PC-9 (cell line): ENCODE measurements at regions of chr19 and their contacts with region 1.

Region 1: GRCh38 chr19:19510430-19510829 is 4.9 kb downstream of the TSSK6 start:
- DNase-seq: peak in 1 of 2 experiments; percentile 20
- H3K4me3 ChIP-seq: no peak overlapping the region
- H3K27ac ChIP-seq: no peak overlapping the region
- H3K4me1 ChIP-seq: no peaks in the 10 kb centered on the region
- H3K27me3 ChIP-seq: no peaks in the 10 kb centered on the region
- CTCF ChIP-seq: no peak

Region 2: DNA sequence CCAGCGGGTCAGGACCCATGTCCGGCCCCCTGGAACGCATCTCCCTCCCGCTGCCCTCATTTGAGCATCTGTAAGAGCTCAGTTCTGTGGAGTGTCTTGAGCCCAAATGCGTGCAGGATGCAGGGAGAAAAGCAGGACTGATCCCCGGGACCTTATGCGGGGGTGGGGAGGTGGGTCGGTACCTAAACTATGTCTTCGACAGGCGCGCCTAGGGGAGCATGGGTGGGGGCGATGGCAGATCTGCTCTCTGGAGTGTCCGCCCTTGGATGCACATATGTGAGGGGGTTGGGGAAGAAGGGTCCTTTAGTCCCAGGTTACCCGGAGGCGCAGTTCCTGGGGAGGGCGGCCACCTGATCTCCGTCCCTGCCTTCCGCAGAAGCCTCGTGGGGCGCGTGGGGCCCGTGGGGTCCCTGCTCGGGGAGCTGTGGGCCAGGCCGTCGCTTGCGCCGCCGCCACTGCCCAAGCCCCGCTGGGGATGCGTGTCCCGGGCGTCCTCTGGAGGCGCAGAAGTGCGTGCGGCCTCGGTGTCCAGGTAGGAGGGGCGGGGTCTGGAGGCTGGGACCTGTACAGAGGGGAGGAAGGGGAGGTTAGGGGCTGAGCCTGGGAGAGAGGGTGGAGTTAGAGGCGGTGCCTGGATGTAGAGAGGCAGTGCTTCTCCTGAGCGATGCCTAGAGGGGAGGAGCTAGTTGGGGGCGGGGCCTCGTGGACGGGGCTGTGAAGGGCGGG is 30.4 kb after region 1 on chr19:
- CTCF ChIA-PET with region 1: no interaction called
- POLR2A ChIA-PET with region 1: interaction called, 19 read pairs
- intact Hi-C with region 1: no loop called
- DNase-seq: peak; percentile 86 to 91
- H3K4me3 ChIP-seq: peak overlapping the region; percentile 58
- H3K27ac ChIP-seq: no peak overlapping the region
- H3K4me1 ChIP-seq: no peaks in the 10 kb centered on the region
- H3K27me3 ChIP-seq: no peaks in the 10 kb centered on the region
- CTCF ChIP-seq: no peak; the same call in 1 of the 2 replicates